ENCODE measurements at regions of chr9 and their contacts with region 1.

Region 1: GRCh38 chr9:92669890-92670708 is at the start of gene IPPK:
- DNase-seq: peak; percentile 92 to 99 (median 95)
- ATAC-seq: peak; percentile 94
- H3K4me3 ChIP-seq: peak within 1 kb of the TSS; percentile 100
- H3K4me3 Mint-ChIP-seq: peak within 1 kb of the TSS; percentile 98
- H3K27ac ChIP-seq: peak within 1 kb of the TSS; percentile 88 to 96
- H3K27ac Mint-ChIP-seq: peak within 1 kb of the TSS; percentile 99
- H3K4me1 ChIP-seq: peaks cover 37% of the 10 kb centered on the region
- H3K4me1 Mint-ChIP-seq: peaks cover 45% of the 10 kb centered on the region
- H3K27me3 ChIP-seq: no peaks in the 10 kb centered on the region
- H3K27me3 Mint-ChIP-seq: no peaks in the 10 kb centered on the region
- CTCF ChIP-seq: no peak
- total RNA-seq, gene IPPK: 4.0 to 4.4 TPM

Region 2: DNA sequence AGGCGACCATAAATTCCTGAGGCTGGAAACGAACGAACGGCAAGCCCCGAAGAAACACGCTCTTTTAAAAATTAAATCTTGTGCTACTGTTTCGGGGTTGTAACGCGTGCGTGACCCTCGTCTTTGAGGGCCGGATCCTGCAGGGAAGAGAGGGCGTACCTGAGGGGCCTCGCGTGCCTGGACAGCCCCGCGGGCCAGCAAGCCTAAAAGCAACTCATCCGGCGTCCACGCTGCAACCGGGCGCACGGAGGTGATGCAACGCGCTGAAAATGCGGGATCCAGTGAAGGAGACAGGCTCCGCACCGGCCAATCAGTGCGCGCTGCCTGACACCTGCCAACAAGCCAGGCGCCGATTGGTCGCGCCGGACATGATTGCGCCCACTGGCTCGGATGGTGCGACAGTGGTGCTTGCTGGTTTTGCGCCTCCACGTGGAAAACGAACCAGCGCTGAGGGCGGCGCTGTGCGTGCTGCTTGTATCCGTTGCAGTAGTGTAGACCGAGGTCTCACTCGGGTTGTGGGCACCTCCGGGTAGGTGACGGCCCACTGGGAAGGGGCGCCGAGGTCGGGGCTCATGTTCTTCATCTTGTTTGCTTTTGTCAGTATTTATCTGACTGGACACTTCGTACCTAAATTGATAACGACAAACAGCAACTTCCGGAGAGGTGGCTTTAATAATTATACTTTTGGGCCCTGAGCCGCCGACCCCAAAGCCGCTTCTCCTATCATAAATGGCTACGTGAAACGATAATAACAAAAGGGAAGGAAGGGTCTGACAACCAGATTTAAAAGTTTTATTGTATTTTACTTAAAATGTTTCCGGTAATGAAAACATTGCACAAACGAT is 376.4 kb before region 1 on chr9 and contains the start of gene IARS1:
- CTCF ChIA-PET with region 1: no interaction called
- POLR2A ChIA-PET with region 1: interaction called, 4 read pairs
- intact Hi-C with region 1: loop called in 1 of 2 experiments (anchors 5 kb)
- DNase-seq: peak; percentile 97 to 100 (median 99)
- ATAC-seq: peak; percentile 93
- H3K4me3 ChIP-seq: peak within 1 kb of the TSS; percentile 70
- H3K4me3 Mint-ChIP-seq: peak within 1 kb of the TSS; percentile 98
- H3K27ac ChIP-seq: peak within 1 kb of the TSS; percentile 73 to 74
- H3K27ac Mint-ChIP-seq: peak within 1 kb of the TSS; percentile 97
- H3K4me1 ChIP-seq: peaks cover 25% of the 10 kb centered on the region
- H3K4me1 Mint-ChIP-seq: peaks cover 69% of the 10 kb centered on the region
- H3K27me3 ChIP-seq: no peaks in the 10 kb centered on the region
- H3K27me3 Mint-ChIP-seq: no peaks in the 10 kb centered on the region
- CTCF ChIP-seq: no peak
- total RNA-seq, gene IARS1: 49.8 to 56.8 TPM

Region 3: GRCh38 chr9:92716557-92716956 is 46.5 kb after region 1 on chr9:
- CTCF ChIA-PET with region 1: no interaction called
- POLR2A ChIA-PET with region 1: interaction called, 10 read pairs
- intact Hi-C with region 1: no loop called
- DNase-seq: peak; percentile 70 to 90 (median 82)
- ATAC-seq: peak; percentile 83
- H3K4me3 ChIP-seq: no peak overlapping the region
- H3K4me3 Mint-ChIP-seq: no peak overlapping the region
- H3K27ac ChIP-seq: no peak overlapping the region
- H3K27ac Mint-ChIP-seq: no peak overlapping the region
- H3K4me1 ChIP-seq: peaks cover 18% of the 10 kb centered on the region
- H3K4me1 Mint-ChIP-seq: peaks cover 17% of the 10 kb centered on the region
- H3K27me3 ChIP-seq: no peaks in the 10 kb centered on the region
- H3K27me3 Mint-ChIP-seq: no peaks in the 10 kb centered on the region
- CTCF ChIP-seq: peak; percentile 94

Region 4: GRCh38 chr9:93453047-93453914 is 783.2 kb after region 1 on chr9 and contains the start of gene FAM120AOS:
- CTCF ChIA-PET with region 1: no interaction called
- POLR2A ChIA-PET with region 1: interaction called, 4 read pairs
- intact Hi-C with region 1: loop called in 1 of 2 experiments (anchors 5 kb)
- DNase-seq: peak; percentile 65 to 93 (median 76)
- ATAC-seq: peak; percentile 71
- H3K4me3 ChIP-seq: peak within 1 kb of the TSS; percentile 90
- H3K4me3 Mint-ChIP-seq: peak within 1 kb of the TSS; percentile 98
- H3K27ac ChIP-seq: peak within 1 kb of the TSS; percentile 67 to 81
- H3K27ac Mint-ChIP-seq: peak within 1 kb of the TSS; percentile 94
- H3K4me1 ChIP-seq: peaks cover 29% of the 10 kb centered on the region
- H3K4me1 Mint-ChIP-seq: peaks cover 64% of the 10 kb centered on the region
- H3K27me3 ChIP-seq: no peaks in the 10 kb centered on the region
- H3K27me3 Mint-ChIP-seq: no peaks in the 10 kb centered on the region
- CTCF ChIP-seq: no peak
- total RNA-seq, gene FAM120AOS: 45.6 to 50.3 TPM

Region 5: GRCh38 chr9:94166237-94166963 is 1496.3 kb after region 1 on chr9:
- CTCF ChIA-PET with region 1: no interaction called
- POLR2A ChIA-PET with region 1: interaction called, 3 read pairs
- intact Hi-C with region 1: loop called in 1 of 2 experiments (anchors 10 kb)
- DNase-seq: peak; percentile 86 to 98 (median 92)
- ATAC-seq: peak; percentile 60
- H3K4me3 ChIP-seq: peak overlapping the region; percentile 94
- H3K4me3 Mint-ChIP-seq: peak overlapping the region; percentile 100
- H3K27ac ChIP-seq: peak overlapping the region; percentile 86 to 95
- H3K27ac Mint-ChIP-seq: peak overlapping the region; percentile 98
- H3K4me1 ChIP-seq: peaks cover 21% of the 10 kb centered on the region
- H3K4me1 Mint-ChIP-seq: peaks cover 64% of the 10 kb centered on the region
- H3K27me3 ChIP-seq: no peaks in the 10 kb centered on the region
- H3K27me3 Mint-ChIP-seq: no peaks in the 10 kb centered on the region
- CTCF ChIP-seq: no peak